ENCODE measurements at regions of chr1 and their contacts with region 1.

Region 1: GRCh38 chr1:209747580-209748262 is 8.1 kb upstream of the TRAF3IP3 start:
- DNase-seq: peak; percentile 78
- H3K4me3 Mint-ChIP-seq: peak overlapping the region; percentile 69
- H3K27ac Mint-ChIP-seq: peak overlapping the region; percentile 90
- H3K4me1 Mint-ChIP-seq: peaks cover 75% of the 10 kb centered on the region
- H3K27me3 Mint-ChIP-seq: no peaks in the 10 kb centered on the region

Region 2: DNA sequence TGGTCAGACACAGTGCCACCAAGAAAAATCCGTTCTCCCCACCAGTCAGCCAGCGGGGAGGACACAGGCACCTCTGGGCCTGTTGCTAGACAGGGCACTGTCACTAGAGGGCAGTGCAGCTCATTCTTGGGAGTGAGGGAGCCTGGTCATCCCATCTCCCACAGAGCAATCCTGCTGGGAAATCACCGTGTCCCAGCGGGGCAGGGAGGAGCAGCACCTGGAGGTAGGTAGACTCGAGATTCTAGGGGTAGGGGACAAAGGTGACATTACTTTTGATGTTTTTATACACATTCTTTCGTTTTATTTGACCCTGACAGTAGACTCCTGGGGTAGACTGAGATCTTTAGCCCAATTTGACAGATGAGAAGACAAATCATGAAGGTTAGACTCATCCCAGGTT is 170.9 kb before region 1 on chr1:
- intact Hi-C with region 1: loop called (anchors 1 kb)
- DNase-seq: peak; percentile 49
- H3K4me3 Mint-ChIP-seq: no peak overlapping the region
- H3K27ac Mint-ChIP-seq: no peak overlapping the region
- H3K4me1 Mint-ChIP-seq: peaks cover 7% of the 10 kb centered on the region
- H3K27me3 Mint-ChIP-seq: peaks cover 25% of the 10 kb centered on the region

Region 3: DNA sequence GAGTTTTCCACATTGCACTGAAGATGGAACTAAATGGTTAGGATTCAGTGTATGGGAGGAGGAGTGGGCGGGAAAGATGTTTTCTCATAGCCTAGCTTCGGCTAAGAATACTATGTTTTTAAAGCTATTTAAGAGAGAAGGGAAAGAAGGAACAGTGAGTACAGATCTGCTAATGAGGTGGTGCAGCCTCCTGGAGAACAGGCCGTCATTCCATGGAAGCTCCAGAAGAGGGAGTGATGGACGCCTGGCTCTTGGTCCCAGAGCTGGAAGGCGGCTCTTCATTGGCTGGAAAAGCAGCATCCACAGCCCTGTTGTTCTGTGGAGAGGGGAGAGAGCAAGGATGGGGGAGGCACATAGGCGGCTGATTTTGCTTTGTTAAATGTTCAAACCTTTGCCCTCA is 157.3 kb before region 1 on chr1:
- intact Hi-C with region 1: no loop called
- DNase-seq: no peak
- H3K4me3 Mint-ChIP-seq: no peak overlapping the region
- H3K27ac Mint-ChIP-seq: no peak overlapping the region
- H3K4me1 Mint-ChIP-seq: no peaks in the 10 kb centered on the region
- H3K27me3 Mint-ChIP-seq: peaks cover 43% of the 10 kb centered on the region

Region 4: DNA sequence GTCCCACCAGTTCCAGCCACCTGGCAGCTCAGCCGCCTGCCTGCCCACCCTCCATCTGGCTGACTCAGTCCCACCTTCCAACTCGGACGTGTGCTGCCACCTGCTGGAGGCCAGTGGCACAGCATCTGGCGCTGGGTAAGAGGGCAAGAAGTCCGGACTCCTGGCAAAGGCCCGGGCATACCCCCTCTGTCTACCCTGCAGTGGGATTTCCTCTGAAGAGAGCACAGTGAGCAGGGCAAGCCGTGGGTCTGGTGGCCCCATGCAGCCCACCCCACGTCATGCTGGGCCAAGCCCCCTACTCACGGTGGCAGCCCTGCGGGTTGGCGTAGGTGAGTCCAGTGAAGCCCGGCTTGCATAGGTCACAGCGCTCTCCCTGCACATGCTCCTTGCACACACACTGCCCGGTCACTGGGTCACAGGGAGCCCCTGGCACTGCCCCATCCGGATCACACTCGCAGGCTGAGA is 120.0 kb before region 1 on chr1:
- intact Hi-C with region 1: loop called (anchors 1 kb)
- DNase-seq: peak; percentile 67
- H3K4me3 Mint-ChIP-seq: no peak overlapping the region
- H3K27ac Mint-ChIP-seq: no peak overlapping the region
- H3K4me1 Mint-ChIP-seq: peaks cover 16% of the 10 kb centered on the region
- H3K27me3 Mint-ChIP-seq: no peaks in the 10 kb centered on the region

Region 5: GRCh38 chr1:209692745-209693504 is 54.8 kb before region 1 on chr1:
- intact Hi-C with region 1: loop called (anchors 1 kb)
- DNase-seq: peak; percentile 65
- H3K4me3 Mint-ChIP-seq: peak overlapping the region; percentile 3
- H3K27ac Mint-ChIP-seq: peak overlapping the region; percentile 74
- H3K4me1 Mint-ChIP-seq: peaks cover 70% of the 10 kb centered on the region
- H3K27me3 Mint-ChIP-seq: no peaks in the 10 kb centered on the region

Region 6: DNA sequence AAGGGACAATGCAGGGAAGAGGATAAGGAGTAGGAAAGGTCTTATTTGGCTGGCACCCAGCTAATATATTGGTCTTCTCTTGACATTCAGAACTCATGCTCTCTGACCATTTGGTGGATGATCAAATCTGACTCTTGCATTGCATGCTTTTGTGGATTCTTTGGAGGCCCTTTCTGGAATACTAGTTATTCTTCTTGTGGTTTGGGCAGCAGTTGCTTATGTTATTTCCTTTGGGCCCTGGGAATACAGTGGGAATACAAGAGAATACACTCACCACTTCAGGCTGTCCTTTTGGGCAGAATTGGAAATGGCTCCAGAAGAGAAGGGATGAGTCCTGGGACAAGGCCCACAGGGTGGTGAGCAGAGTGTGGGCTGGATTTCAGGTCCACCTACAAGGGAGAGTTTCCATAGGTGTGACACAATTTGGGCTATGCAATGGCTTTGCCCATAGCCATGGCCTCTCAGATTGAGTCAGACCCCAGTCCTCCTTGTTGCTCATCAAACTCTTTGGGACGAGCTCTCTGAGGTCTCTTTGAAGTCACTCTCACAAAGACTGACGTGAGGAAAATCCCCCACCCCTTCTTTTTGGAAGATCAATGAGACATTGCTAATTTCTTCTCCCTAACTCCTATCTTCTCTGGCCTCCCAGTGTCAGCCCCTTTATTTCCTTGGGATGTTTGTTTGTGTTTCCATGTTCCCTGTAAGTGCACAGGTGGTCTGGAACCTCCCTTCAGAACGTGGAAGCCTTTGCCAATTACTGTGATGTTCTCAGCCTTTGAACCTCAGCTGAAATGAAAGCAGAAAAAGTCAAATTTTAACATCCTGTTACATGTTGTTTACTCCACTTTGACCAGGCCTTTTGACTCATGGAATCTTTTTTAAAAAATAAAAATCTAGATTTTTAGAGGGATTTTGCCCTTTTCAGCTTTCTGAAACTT is 23.7 kb before region 1 on chr1:
- intact Hi-C with region 1: loop called (anchors 1 kb)
- DNase-seq: peak; percentile 37
- H3K4me3 Mint-ChIP-seq: peak overlapping the region; percentile 53
- H3K27ac Mint-ChIP-seq: peak overlapping the region; percentile 100
- H3K4me1 Mint-ChIP-seq: peaks cover 68% of the 10 kb centered on the region
- H3K27me3 Mint-ChIP-seq: no peaks in the 10 kb centered on the region

Region 7: GRCh38 chr1:209784265-209785169 is 36.8 kb after region 1 on chr1 and contains the start of gene C1orf74:
- intact Hi-C with region 1: loop called (anchors 1 kb)
- DNase-seq: peak; percentile 100
- H3K4me3 Mint-ChIP-seq: peak within 1 kb of the TSS; percentile 90
- H3K27ac Mint-ChIP-seq: peak within 1 kb of the TSS; percentile 96
- H3K4me1 Mint-ChIP-seq: peaks cover 71% of the 10 kb centered on the region
- H3K27me3 Mint-ChIP-seq: no peaks in the 10 kb centered on the region
- total RNA-seq, gene C1orf74: 2.9 and 3.2 TPM in 2 replicates

Region 8: GRCh38 chr1:209797978-209798639 is 50.4 kb after region 1 on chr1:
- intact Hi-C with region 1: no loop called
- DNase-seq: no peak
- H3K4me3 Mint-ChIP-seq: no peak overlapping the region
- H3K27ac Mint-ChIP-seq: no peak overlapping the region
- H3K4me1 Mint-ChIP-seq: no peaks in the 10 kb centered on the region
- H3K27me3 Mint-ChIP-seq: peaks cover 11% of the 10 kb centered on the region

Region 9: DNA sequence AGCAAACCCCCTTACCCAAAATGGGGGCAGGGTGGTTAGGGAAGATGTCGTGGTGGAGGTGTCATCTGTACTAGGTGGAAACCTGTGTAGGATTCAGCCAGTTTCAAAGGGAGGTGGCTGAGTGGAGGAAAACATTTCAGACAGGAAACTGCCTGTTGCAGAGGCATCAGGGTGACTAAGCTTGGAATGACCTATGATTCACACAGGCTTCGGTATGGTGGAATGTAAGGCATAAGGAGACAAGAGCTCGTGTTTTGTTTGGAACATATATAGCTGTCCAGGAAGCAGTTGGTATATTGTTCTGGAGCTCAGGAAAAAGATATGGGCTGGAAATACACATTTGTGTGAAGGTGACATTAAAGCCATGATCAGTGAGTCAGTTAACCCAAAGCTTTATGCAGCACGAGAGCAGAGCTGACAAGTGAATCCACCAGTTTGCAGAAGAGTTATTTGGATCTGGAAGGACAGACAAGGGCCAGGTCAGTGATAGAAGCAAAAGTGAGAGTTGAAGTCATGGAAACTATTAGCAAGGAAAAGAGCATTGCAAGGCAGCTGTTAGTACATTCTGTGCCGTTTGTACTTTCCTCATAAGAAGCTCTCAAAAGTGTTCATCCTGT is 92.3 kb after region 1 on chr1:
- intact Hi-C with region 1: no loop called
- DNase-seq: no peak
- H3K4me3 Mint-ChIP-seq: peak overlapping the region; percentile 45
- H3K27ac Mint-ChIP-seq: peak overlapping the region; percentile 83
- H3K4me1 Mint-ChIP-seq: peaks cover 46% of the 10 kb centered on the region
- H3K27me3 Mint-ChIP-seq: no peaks in the 10 kb centered on the region

Region 10: GRCh38 chr1:209899948-209900347 is 152.2 kb after region 1 on chr1:
- intact Hi-C with region 1: no loop called
- DNase-seq: no peak
- H3K4me3 Mint-ChIP-seq: no peak overlapping the region
- H3K27ac Mint-ChIP-seq: no peak overlapping the region
- H3K4me1 Mint-ChIP-seq: peaks cover 13% of the 10 kb centered on the region
- H3K27me3 Mint-ChIP-seq: peaks cover 5% of the 10 kb centered on the region